ENCODE measurements at regions of chr12 and their contacts with region 1.

Region 1: GRCh38 chr12:87509237-87509820 is 519.9 kb downstream of the C12orf50 start:
- DNase-seq: peak; percentile 11
- H3K4me3 Mint-ChIP-seq: no peak overlapping the region
- H3K27ac Mint-ChIP-seq: peak overlapping the region; percentile 10
- H3K4me1 Mint-ChIP-seq: peaks cover 9% of the 10 kb centered on the region
- H3K27me3 Mint-ChIP-seq: no peaks in the 10 kb centered on the region
- CTCF ChIP-seq: no peak

Region 2: DNA sequence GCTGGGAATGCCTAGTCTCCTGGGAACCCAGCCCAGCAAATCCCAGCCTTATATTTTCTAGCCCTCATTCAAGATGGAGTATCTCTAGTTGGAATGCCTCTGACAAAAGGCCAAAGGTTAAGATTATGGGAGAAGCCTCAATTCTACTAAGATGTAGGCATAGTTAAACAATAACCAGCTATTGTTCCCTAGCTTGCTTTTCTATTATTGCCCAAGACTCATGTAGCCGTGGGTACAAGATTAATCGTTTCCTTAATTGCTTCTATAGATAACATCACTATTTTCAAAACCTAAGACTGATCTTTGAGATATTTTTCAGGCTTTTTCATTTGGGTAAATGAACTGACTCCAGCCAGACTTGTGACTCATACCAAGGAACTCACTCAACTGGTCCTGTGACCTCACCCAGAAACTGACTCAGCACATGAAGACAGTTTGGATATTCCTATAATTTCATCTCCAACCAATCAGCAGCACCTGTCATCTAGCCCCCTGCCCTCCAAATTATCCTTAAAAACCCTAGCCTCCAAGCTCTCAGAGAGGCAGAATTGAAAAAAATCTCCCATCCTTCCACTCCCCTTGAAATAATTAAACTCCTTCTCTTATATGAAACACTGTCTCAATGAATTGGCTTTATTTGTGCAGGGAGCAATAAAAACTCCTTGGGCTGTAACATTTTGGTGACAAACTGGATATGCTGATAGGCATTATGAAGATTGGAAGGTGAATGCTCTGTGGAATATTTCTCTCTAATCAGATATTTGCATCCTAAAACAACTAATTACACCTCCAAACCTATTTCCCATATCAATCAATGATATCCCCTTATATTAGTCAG is 69.1 kb before region 1 on chr12:
- CTCF ChIA-PET with region 1: no interaction called
- intact Hi-C with region 1: loop called (anchors 5 kb)
- DNase-seq: peak; percentile 79
- H3K4me3 Mint-ChIP-seq: peak overlapping the region; percentile 3
- H3K27ac Mint-ChIP-seq: peak overlapping the region; percentile 90
- H3K4me1 Mint-ChIP-seq: peaks cover 60% of the 10 kb centered on the region
- H3K27me3 Mint-ChIP-seq: no peaks in the 10 kb centered on the region
- CTCF ChIP-seq: no peak

Measured in Calu3 (cell line).